Cardiac septum (tissue), 1 donor: ENCODE measurements at regions of chr9 and their contacts with region 1.

Region 1: DNA sequence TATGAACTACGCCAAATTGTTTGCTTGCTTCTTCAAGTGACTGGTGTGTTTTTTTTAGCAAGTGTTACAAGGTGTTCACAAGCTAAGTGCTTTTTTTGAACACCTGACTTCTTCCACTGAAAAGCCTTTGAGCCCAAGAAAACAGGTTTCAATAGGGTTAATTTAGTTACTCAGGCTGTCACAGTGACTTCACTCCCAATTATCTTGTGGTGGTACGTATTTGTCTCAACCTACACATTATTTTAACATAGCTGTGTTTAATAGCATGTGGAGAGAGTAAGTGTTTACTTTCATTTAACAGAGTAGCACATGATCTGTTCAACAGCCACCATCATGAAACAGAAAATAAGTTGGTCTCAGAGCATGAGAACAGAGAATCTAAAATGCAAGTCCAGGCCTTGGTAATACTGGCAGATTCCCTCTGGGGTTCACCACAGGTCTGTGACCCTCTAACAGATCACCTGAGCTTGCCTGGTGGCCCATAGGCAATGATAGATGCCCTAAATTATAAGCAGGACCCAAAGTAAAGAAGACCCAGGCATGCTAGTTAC is 267.7 kb upstream of the SMARCA2 start:
- DNase-seq: no peak

Region 2: DNA sequence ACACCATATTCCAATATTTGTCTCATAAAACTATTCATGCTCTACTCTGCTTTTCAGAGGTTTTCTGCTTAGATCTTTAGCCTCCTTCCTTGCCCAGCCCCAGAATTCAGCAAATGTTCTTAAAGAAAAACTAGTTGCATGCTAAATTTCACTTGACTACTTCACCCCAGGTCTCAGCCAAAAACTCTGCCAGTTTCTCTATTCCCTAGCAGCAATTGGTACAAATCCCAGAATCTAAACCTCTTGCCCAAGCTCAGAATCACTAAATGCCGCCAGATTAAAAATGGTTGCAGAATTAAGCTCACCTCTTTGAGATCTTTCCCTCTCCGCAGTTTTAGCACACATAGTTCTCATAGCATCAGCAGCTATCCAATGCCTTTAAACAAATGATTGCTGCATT is 63.5 kb before region 1 on chr9:
- intact Hi-C with region 1: loop called (anchors 10 kb)
- DNase-seq: no peak

Region 3: GRCh38 chr9:1845425-1845824 is 97.9 kb after region 1 on chr9:
- intact Hi-C with region 1: no loop called
- DNase-seq: no peak